ENCODE measurements at regions of chr2 and their contacts with region 1.

Region 1: DNA sequence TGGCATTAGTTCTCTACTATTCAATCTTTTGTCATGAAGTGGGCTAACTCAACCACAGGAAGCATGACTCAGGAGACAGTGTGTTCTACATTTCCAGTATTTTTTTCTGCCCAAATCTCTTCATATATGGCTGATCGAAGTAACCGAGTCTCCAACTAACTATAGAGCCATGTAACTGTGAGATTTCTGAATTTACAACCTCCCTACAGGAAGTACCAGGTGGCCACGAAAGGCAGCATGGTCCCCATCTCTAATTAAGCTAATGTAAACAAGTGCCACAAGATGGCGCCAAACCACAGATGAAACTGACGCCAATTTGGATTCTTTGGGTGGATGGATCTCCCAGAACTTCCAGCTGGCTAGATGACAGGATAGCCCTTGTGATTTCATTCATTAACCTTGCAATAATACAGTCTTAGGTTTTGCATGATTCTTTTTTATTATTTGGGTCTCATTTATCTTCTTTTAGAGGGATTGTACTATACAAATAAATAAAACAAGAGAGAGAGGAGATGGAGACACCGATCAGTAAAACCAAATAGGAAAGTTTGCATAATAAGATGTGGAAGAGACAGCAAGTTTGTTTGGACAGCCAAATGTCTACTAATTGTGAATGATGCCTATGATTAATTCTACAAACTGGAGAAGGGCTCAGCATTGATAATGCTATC is 18.3 kb upstream of the ARHGAP15 start:
- DNase-seq: peak; percentile 84
- ATAC-seq: peak; percentile 86
- H3K4me3 ChIP-seq: no peak overlapping the region
- H3K4me3 Mint-ChIP-seq: no peak overlapping the region
- H3K27ac ChIP-seq: no peak overlapping the region
- H3K27ac Mint-ChIP-seq: peak overlapping the region; percentile 76
- H3K4me1 ChIP-seq: peaks cover 4 to 6% of the 10 kb centered on the region in 2 donors
- H3K4me1 Mint-ChIP-seq: peaks cover 6% of the 10 kb centered on the region
- H3K27me3 ChIP-seq: no peaks in the 10 kb centered on the region
- H3K27me3 Mint-ChIP-seq: no peaks in the 10 kb centered on the region
- CTCF ChIP-seq: peak; percentile 98

Region 2: DNA sequence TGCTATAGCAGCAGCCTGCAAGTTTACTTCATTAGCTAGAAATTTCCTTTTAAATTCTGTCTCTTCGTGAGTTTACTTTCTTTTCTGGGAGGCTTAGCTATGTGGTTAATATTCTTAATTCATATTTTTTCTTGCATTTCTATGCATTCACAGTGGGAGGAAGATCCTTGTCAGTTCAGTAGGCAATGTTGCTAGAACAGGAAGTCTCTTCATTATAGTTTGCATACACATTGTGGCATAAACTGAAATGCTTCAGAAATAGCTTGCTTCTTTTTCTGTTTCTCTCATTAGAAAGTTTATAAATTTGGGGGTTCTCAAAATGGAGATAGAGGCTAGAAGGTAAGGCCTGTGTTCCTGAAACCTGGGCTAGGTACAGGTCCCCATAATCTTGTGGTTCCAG is 10.2 kb after region 1 on chr2:
- CTCF ChIA-PET with region 1: interaction called, 75 read pairs
- POLR2A ChIA-PET with region 1: no interaction called
- intact Hi-C with region 1: no loop called
- DNase-seq: no peak
- ATAC-seq: no peak
- H3K4me3 ChIP-seq: peak overlapping the region in 2 of 5 experiments; percentile 6 to 34
- H3K4me3 Mint-ChIP-seq: no peak overlapping the region
- H3K27ac ChIP-seq: peak overlapping the region; percentile 45 to 72
- H3K27ac Mint-ChIP-seq: no peak overlapping the region
- H3K4me1 ChIP-seq: peaks cover 33 to 35% of the 10 kb centered on the region in 2 donors
- H3K4me1 Mint-ChIP-seq: peaks cover 17% of the 10 kb centered on the region
- H3K27me3 ChIP-seq: no peaks in the 10 kb centered on the region
- H3K27me3 Mint-ChIP-seq: no peaks in the 10 kb centered on the region
- CTCF ChIP-seq: no peak

Region 3: DNA sequence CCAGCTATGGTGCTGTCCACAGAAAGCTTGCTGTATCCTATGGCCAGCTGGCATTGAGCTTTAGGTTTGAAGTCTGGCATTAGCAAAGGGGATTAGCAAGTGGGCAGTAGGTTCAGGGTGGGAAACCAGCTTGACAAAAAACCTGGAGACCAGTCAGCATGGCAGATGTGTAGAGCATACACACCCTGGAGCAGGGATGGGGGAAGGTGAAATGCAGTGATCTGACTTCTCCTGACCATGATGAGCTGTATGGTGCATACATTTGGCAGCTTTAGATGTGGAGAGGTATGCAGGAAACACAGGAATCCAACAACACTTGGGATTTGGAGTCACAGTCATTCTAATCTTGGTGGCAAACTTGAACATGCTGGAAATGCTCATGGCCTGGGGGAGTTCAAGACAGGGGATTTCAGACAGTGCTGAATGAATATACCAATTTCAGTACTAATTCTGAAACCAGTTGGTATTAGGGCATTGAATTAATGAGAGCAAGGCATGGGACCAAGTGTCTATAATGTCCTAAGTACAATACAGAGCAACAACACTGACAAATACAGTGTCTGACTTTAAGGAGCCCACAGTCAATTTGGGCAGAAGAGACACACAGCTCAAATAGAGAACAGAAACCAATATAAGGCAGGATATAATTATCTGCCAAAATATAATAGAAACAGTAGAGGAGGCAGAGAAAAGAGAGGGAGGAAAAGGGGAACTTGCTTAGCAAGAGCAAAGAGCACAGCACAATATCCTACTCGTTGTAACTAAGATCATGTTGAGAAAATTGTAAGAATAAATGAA is 30.2 kb after region 1 on chr2:
- CTCF ChIA-PET with region 1: interaction called, 25 read pairs
- POLR2A ChIA-PET with region 1: no interaction called
- intact Hi-C with region 1: no loop called
- DNase-seq: peak; percentile 75
- ATAC-seq: peak; percentile 90
- H3K4me3 ChIP-seq: peak overlapping the region in 4 of 5 experiments; percentile 1 to 54 (median 6)
- H3K4me3 Mint-ChIP-seq: peak overlapping the region; percentile 63
- H3K27ac ChIP-seq: peak overlapping the region; percentile 58 to 80
- H3K27ac Mint-ChIP-seq: peak overlapping the region; percentile 88
- H3K4me1 ChIP-seq: peaks cover 59 to 81% of the 10 kb centered on the region in 2 donors
- H3K4me1 Mint-ChIP-seq: peaks cover 88% of the 10 kb centered on the region
- H3K27me3 ChIP-seq: no peaks in the 10 kb centered on the region
- H3K27me3 Mint-ChIP-seq: no peaks in the 10 kb centered on the region
- CTCF ChIP-seq: no peak

Region 4: DNA sequence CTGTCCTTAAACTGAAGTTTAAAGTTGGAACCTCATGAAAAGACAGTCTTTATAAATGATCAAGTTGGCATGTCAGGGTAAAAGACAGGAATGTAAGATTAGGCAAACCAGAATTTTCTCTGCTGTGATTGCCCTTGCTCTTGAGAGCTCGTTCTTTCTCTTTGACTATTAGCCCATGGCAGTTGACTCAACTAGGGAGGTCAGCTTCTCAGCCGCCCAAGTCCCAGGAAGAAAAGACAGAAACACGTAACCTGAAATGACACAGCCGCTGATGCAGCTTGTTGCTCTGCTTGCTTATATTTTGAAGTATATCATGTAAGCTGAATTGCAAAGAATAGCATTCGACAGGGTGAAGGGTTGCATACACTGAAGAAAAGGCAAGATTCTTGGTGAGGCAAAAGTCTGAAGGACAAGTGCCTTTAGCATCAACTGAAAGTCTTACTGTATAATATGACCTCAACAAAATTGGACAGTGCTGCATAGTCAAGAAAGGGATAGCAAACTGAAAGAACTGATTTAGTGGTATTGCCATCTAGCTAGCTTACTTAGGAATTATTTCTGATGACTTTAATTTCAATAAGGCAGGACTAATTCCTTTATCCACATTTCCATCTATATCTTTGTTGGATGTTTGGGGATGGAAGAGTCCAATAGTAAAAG is 73.0 kb after region 1 on chr2:
- CTCF ChIA-PET with region 1: interaction called, 19 read pairs
- POLR2A ChIA-PET with region 1: no interaction called
- intact Hi-C with region 1: no loop called
- DNase-seq: no peak
- ATAC-seq: no peak
- H3K4me3 ChIP-seq: no peak overlapping the region
- H3K4me3 Mint-ChIP-seq: peak overlapping the region; percentile 26
- H3K27ac ChIP-seq: no peak overlapping the region
- H3K27ac Mint-ChIP-seq: peak overlapping the region; percentile 68
- H3K4me1 ChIP-seq: peaks cover 4 to 12% of the 10 kb centered on the region in 2 donors
- H3K4me1 Mint-ChIP-seq: peaks cover 62% of the 10 kb centered on the region
- H3K27me3 ChIP-seq: no peaks in the 10 kb centered on the region
- H3K27me3 Mint-ChIP-seq: no peaks in the 10 kb centered on the region
- CTCF ChIP-seq: no peak

Region 5: GRCh38 chr2:143205106-143205764 is 94.3 kb after region 1 on chr2:
- CTCF ChIA-PET with region 1: interaction called, 22 read pairs
- POLR2A ChIA-PET with region 1: interaction called, 4 read pairs
- intact Hi-C with region 1: no loop called
- DNase-seq: peak; percentile 55
- ATAC-seq: peak; percentile 39
- H3K4me3 ChIP-seq: no peak overlapping the region
- H3K4me3 Mint-ChIP-seq: no peak overlapping the region
- H3K27ac ChIP-seq: peak overlapping the region in 1 of 2 donors; percentile 50
- H3K27ac Mint-ChIP-seq: peak overlapping the region; percentile 16
- H3K4me1 ChIP-seq: peaks cover 10 to 17% of the 10 kb centered on the region in 2 donors
- H3K4me1 Mint-ChIP-seq: peaks cover 29% of the 10 kb centered on the region
- H3K27me3 ChIP-seq: no peaks in the 10 kb centered on the region
- H3K27me3 Mint-ChIP-seq: no peaks in the 10 kb centered on the region
- CTCF ChIP-seq: peak; percentile 56

Region 6: DNA sequence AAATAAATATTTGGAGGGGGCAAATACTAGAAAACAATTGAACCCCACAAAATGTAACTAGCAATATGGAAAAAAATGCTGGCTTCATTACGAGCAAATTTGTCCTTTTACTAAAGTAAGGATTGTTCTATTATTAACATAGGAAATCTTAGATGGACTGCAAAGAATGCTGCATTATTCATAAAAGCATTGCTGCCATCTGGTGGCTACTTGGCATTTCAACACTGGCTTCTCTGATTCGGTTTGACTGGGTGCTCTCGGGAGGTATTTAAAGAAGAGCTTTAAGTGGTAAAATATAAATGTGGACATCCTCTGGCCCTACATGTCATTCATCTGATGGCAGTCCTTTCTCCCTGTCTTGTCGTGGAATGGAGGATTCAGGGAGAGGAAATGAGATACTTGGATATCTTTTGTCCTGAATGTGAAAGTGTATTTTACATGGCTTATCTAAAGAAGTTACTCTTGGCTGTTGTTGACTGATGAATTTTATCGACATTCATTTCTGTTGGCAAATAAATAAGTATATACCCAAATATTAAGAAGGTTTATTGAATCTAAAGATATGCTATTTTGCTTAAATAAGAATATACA is 148.6 kb after region 1 on chr2:
- CTCF ChIA-PET with region 1: interaction called, 220 read pairs
- POLR2A ChIA-PET with region 1: interaction called, 4 read pairs
- intact Hi-C with region 1: loop called (anchors 1 kb)
- DNase-seq: peak; percentile 78
- ATAC-seq: no peak
- H3K4me3 ChIP-seq: no peak overlapping the region
- H3K4me3 Mint-ChIP-seq: peak overlapping the region; percentile 2
- H3K27ac ChIP-seq: peak overlapping the region in 1 of 2 donors; percentile 79
- H3K27ac Mint-ChIP-seq: peak overlapping the region; percentile 10
- H3K4me1 ChIP-seq: peaks cover 51 to 55% of the 10 kb centered on the region in 2 donors
- H3K4me1 Mint-ChIP-seq: peaks cover 66% of the 10 kb centered on the region
- H3K27me3 ChIP-seq: no peaks in the 10 kb centered on the region
- H3K27me3 Mint-ChIP-seq: no peaks in the 10 kb centered on the region
- CTCF ChIP-seq: peak; percentile 92

Measured in B cell (primary cell).